GM12878 (cell line): ENCODE measurements at regions of chr1 and their contacts with region 1.

Region 1: GRCh38 chr1:31861346-31861745 is 45.5 kb upstream of the SPOCD1 start:
- DNase-seq: peak; percentile 24
- ATAC-seq: peak; percentile 94
- H3K4me3 ChIP-seq: no peak overlapping the region
- H3K27ac ChIP-seq: no peak overlapping the region
- H3K4me1 ChIP-seq: peaks cover 6% of the 10 kb centered on the region
- H3K27me3 ChIP-seq: no peaks in the 10 kb centered on the region
- CTCF ChIP-seq: peak; percentile 48 to 55 (median 51)
- EP300 ChIP-seq: no peak
- POLR2A ChIP-seq: no peak
- RAD21 ChIP-seq: peak; percentile 84

Region 2: GRCh38 chr1:31831397-31832378 is 29.7 kb before region 1 on chr1:
- CTCF ChIA-PET with region 1: interaction called, 13 read pairs
- POLR2A ChIA-PET with region 1: no interaction called
- RAD21 ChIA-PET with region 1: no interaction called
- SMC1A ChIA-PET with region 1: interaction called, 4 read pairs
- in situ Hi-C with region 1: no loop called
- intact Hi-C with region 1: no loop called
- DNase-seq: no peak
- ATAC-seq: no peak
- H3K4me3 ChIP-seq: no peak overlapping the region
- H3K27ac ChIP-seq: no peak overlapping the region
- H3K4me1 ChIP-seq: peaks cover 16% of the 10 kb centered on the region
- H3K27me3 ChIP-seq: peaks cover 0 to 1% of the 10 kb centered on the region in 2 experiments; a peak in 1 of 4 replicates
- CTCF ChIP-seq: no peak
- EP300 ChIP-seq: no peak
- POLR2A ChIP-seq: no peak
- RAD21 ChIP-seq: no peak

Region 3: DNA sequence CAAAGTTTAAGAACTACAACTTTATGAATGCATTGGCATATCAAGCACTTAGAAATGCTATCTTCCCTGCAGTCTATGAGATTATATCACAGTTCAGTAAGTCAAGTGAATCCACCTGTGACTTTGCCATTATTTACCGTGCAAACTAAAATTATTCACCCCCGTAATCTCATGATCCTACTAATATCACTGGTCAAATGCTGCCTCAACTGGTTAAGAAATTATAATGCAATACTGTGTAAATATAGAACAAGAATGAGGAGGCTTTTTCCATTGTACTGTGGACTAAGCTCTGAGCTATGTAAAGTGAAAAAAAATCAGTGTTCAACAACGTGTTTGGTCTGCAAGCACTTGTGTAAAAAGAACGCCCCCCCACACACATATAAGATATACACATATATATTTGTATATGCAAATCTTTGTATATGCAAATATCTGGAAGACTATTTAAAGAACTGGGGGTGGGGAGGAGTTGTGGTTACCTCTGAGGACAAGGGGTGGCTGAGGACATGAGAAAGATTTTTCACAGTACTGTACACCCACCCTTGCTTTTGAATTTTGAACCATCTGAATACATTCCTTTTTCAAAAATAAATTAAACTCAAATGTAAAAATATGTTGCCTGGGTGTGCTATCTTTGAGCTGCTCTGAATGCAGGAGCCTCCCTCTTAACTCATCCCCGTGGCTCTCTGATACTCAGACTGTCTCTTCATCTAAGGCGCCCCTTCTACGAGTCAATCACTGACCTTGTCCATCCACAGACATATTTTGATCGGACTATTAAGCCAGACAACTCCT is 19.7 kb after region 1 on chr1:
- CTCF ChIA-PET with region 1: interaction called, 6 read pairs
- POLR2A ChIA-PET with region 1: no interaction called
- RAD21 ChIA-PET with region 1: interaction called, 4 read pairs
- SMC1A ChIA-PET with region 1: interaction called, 10 read pairs
- in situ Hi-C with region 1: no loop called
- intact Hi-C with region 1: no loop called
- DNase-seq: no peak
- ATAC-seq: peak; percentile 78
- H3K4me3 ChIP-seq: peak overlapping the region; percentile 39; the same call in 1 of the 2 replicates
- H3K27ac ChIP-seq: no peak overlapping the region
- H3K4me1 ChIP-seq: peaks cover 20% of the 10 kb centered on the region
- H3K27me3 ChIP-seq: no peaks in the 10 kb centered on the region
- CTCF ChIP-seq: no peak
- EP300 ChIP-seq: no peak
- POLR2A ChIP-seq: no peak
- RAD21 ChIP-seq: no peak

Region 4: DNA sequence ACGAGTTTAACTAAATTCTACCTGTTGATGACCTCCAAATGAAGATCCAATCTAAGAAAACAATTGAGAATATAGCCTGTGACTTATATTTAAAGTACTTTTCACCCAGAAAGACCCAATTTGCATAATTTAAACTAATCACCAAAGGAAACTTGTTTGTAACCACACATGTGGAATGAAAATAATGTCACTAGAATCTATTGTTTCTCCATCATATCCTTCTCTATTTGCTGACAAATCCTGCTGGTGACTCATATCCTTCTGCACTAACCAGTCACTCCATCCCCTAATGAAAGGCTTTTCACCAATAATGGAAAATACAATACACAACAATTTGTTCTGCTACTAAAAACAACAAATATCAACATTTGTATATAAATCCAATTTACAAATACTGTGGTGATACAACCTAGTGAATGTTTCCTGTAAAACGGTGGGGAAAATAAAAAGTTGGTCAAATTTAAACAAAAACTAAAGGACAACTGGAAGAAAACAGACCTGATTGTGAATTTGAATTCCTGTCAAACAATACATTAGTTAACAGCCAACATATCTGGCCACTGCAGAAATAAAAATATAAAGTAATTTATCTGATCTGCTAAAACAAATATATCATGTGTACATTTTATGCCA is 70.4 kb after region 1 on chr1:
- CTCF ChIA-PET with region 1: interaction called, 6 read pairs
- POLR2A ChIA-PET with region 1: interaction called, 3 read pairs
- RAD21 ChIA-PET with region 1: interaction called, 15 read pairs
- SMC1A ChIA-PET with region 1: interaction called, 8 read pairs
- in situ Hi-C with region 1: no loop called
- intact Hi-C with region 1: no loop called
- DNase-seq: no peak
- ATAC-seq: peak; percentile 4; the same call in 1 of the 3 replicates
- H3K4me3 ChIP-seq: peak overlapping the region; percentile 84
- H3K27ac ChIP-seq: peak overlapping the region; percentile 93
- H3K4me1 ChIP-seq: peaks cover 25% of the 10 kb centered on the region
- H3K27me3 ChIP-seq: no peaks in the 10 kb centered on the region
- CTCF ChIP-seq: no peak
- EP300 ChIP-seq: no peak
- POLR2A ChIP-seq: no peak
- RAD21 ChIP-seq: no peak

Region 5: GRCh38 chr1:32286763-32287162 is 425.4 kb after region 1 on chr1:
- CTCF ChIA-PET with region 1: no interaction called
- POLR2A ChIA-PET with region 1: no interaction called
- RAD21 ChIA-PET with region 1: no interaction called
- SMC1A ChIA-PET with region 1: no interaction called
- in situ Hi-C with region 1: no loop called
- intact Hi-C with region 1: no loop called
- DNase-seq: no peak
- ATAC-seq: no peak
- H3K4me3 ChIP-seq: no peak overlapping the region
- H3K27ac ChIP-seq: no peak overlapping the region
- H3K4me1 ChIP-seq: 0 out of 2 replicates have a peak, but pooled peaks cover 3% of the 10 kb centered on the region
- H3K27me3 ChIP-seq: no peaks in the 10 kb centered on the region
- CTCF ChIP-seq: no peak
- EP300 ChIP-seq: no peak
- POLR2A ChIP-seq: no peak
- RAD21 ChIP-seq: no peak